Caco-2 (cell line): ENCODE measurements at regions of chr6 and their contacts with region 1.

Region 1: GRCh38 chr6:49668082-49668512 is 31.5 kb upstream of the RHAG start:
- DNase-seq: peak in 1 of 2 experiments; percentile 7
- H3K4me3 ChIP-seq: no peak overlapping the region
- H3K4me3 Mint-ChIP-seq: no peak overlapping the region
- H3K27ac Mint-ChIP-seq: no peak overlapping the region
- H3K4me1 ChIP-seq: peaks cover 23% of the 10 kb centered on the region
- H3K4me1 Mint-ChIP-seq: no peaks in the 10 kb centered on the region
- H3K27me3 ChIP-seq: no peaks in the 10 kb centered on the region
- H3K27me3 Mint-ChIP-seq: no peaks in the 10 kb centered on the region
- CTCF ChIP-seq: no peak

Region 2: GRCh38 chr6:49497304-49497703 is 170.8 kb before region 1 on chr6:
- CTCF ChIA-PET with region 1: no interaction called
- POLR2A ChIA-PET with region 1: no interaction called
- intact Hi-C with region 1: no loop called
- DNase-seq: no peak
- H3K4me3 ChIP-seq: no peak overlapping the region
- H3K4me3 Mint-ChIP-seq: no peak overlapping the region
- H3K27ac Mint-ChIP-seq: no peak overlapping the region
- H3K4me1 ChIP-seq: no peaks in the 10 kb centered on the region
- H3K4me1 Mint-ChIP-seq: no peaks in the 10 kb centered on the region
- H3K27me3 ChIP-seq: no peaks in the 10 kb centered on the region
- H3K27me3 Mint-ChIP-seq: no peaks in the 10 kb centered on the region
- CTCF ChIP-seq: no peak

Region 3: DNA sequence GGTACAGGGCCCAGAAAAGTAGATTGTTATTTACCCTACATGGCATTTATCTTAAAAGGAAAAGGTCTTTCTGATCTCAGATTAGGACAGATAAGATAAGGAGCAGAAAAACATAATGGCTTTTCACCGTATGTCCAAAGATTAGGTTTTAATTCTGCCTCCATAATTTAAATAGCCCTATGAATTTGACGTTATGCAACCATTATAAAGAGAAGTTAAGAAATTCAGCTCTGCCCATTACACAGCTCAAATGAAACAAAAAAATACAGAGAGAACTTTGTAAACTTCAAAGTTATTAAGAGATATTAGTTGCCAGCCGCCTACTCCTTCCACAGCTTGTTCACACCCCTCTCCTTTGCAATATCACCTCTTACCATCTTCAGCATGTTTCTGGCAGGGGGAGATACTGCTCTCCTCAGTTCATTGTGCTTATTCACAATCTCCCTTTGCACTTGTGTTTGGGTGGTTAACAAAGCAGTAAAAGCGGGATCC is 68.0 kb after region 1 on chr6:
- CTCF ChIA-PET with region 1: no interaction called
- POLR2A ChIA-PET with region 1: no interaction called
- intact Hi-C with region 1: loop called (anchors 1 kb)
- DNase-seq: peak in 1 of 2 experiments; percentile 1
- H3K4me3 ChIP-seq: no peak overlapping the region
- H3K4me3 Mint-ChIP-seq: peak overlapping the region; percentile 59
- H3K27ac Mint-ChIP-seq: peak overlapping the region; percentile 56
- H3K4me1 ChIP-seq: peaks cover 25% of the 10 kb centered on the region
- H3K4me1 Mint-ChIP-seq: peaks cover 9% of the 10 kb centered on the region
- H3K27me3 ChIP-seq: no peaks in the 10 kb centered on the region
- H3K27me3 Mint-ChIP-seq: no peaks in the 10 kb centered on the region
- CTCF ChIP-seq: no peak

Region 4: DNA sequence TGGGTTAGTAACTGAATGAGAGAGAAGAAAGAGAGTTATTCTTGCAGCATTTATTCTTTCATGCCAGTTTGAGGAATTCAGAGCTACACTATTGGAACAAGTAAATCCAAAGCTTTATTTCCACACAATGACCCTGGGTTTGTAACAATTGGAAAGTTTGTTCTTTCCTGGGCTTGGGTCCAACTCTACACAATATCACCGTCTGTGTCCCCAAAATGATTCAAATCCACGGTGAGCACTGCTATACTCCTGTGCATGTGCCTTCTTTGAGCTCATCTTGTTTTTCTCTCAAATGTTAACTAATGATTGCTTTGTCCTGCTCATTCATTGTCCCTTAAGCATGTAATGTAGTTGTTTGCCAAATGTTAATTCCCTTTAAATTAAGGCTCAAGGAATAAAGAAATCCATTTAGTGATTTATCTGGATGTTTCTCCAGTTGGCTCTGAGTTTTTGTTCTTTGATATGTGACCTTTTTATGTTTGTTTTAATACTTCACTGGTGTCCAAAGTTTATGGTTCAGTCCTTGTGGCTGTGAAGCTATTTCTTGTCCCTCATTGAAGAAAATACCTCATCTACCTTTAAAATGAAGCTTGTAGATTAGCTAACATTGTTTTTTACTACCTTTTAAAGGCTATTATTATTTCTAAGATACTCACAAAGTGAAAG is 96.6 kb after region 1 on chr6:
- CTCF ChIA-PET with region 1: no interaction called
- POLR2A ChIA-PET with region 1: no interaction called
- intact Hi-C with region 1: no loop called
- DNase-seq: no peak
- H3K4me3 ChIP-seq: no peak overlapping the region
- H3K4me3 Mint-ChIP-seq: no peak overlapping the region
- H3K27ac Mint-ChIP-seq: no peak overlapping the region
- H3K4me1 ChIP-seq: peaks cover 18% of the 10 kb centered on the region
- H3K4me1 Mint-ChIP-seq: peaks cover 9% of the 10 kb centered on the region
- H3K27me3 ChIP-seq: no peaks in the 10 kb centered on the region
- H3K27me3 Mint-ChIP-seq: no peaks in the 10 kb centered on the region
- CTCF ChIP-seq: no peak